ENCODE measurements at regions of chr13 and their contacts with region 1.

Region 1: GRCh38 chr13:112803422-112803821 is 113.6 kb downstream of the ATP11A start:
- DNase-seq: no peak
- ATAC-seq: peak in 1 of 8 donors; percentile 25
- H3K4me3 ChIP-seq: no peak overlapping the region
- H3K27ac ChIP-seq: no peak overlapping the region
- H3K4me1 ChIP-seq: peaks cover 0 to 10% (median 0%) of the 10 kb centered on the region in 9 donors
- H3K27me3 ChIP-seq: no peaks in the 10 kb centered on the region
- CTCF ChIP-seq: no peak

Region 2: DNA sequence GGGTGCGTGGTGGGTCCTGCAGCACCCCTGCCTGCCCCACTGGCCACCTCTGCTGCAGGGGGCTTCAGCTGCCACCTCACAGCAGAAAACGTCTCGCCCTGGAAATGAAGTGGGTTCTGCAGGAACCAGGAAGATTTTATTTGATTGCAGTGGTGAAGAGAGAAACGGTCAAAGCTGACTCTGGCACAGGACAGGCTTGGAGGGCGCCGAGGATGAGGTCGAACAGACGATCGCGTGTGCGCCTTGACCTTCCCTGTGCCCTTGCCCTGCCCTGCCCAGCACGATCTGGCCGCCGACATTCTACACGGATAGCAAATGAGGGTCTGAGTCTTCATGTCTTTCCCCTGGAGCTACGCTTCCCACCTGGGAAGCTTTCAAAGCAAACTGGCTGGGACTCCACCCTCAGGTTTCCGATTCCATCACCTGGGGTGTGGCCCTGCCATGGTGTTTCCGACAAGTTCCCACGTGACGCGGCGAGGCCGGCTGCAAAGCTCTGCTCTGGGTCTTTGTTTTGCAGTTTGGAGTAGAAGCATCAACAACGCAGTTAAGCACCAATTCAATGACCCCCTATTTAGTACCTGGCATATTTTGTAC is 165.2 kb before region 1 on chr13:
- intact Hi-C with region 1: loop called in 1 of 10 experiments (anchors 10 kb)
- DNase-seq: no peak
- ATAC-seq: no peak
- H3K4me3 ChIP-seq: no peak overlapping the region
- H3K27ac ChIP-seq: no peak overlapping the region
- H3K4me1 ChIP-seq: peaks cover 0 to 16% (median 0%) of the 10 kb centered on the region in 9 donors
- H3K27me3 ChIP-seq: peaks cover 0 to 58% (median 49%) of the 10 kb centered on the region in 7 donors
- CTCF ChIP-seq: no peak